ENCODE measurements at regions of chr18 and their contacts with region 1.

Region 1: DNA sequence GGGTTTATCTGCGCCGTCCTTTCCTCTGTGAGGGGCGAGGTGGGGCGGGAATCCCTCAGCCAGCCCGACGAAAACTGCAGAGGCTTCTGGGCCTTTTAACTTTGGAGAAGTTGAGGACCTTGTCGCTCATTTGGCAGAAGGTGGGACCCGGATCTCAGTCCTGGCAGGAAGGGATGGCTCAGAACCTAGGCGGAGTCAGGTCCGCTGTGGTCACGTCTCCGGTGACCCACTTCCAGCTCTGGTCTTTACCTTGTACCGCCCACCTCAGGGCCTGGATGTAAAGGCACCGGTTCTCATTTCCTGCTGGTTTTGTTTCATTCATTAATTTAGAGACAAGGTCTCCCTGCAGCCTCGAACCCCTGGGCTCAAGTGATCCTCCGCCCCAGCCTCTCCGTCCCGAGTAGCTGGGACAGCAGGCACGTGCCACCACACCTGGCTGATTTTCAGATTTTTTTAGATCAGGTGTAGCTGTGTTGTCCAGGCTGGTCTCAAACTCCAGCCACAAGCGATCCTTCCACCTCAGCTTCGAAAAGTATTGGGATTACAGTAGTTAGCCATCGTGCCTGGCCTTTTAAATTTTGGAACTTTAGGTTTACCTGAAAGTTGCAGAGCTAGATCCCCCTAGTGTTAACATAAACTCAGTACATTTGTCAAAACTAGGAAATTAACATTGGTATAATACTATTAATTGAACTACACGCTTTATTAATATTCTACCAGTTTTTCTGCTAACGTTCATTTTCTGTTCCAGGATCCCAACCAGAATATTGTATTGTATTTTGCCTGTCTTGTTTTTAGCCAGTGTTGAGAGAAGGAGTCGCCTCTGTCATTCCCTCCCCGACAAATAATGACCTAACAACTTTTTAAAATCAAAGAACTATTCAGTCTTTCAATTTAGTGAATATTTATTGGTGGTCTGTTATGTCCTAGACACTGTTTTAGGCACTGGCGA is 852 bp downstream of the POLI start:
- DNase-seq: peak in 1 of 2 donors; percentile 76
- H3K4me3 ChIP-seq: peak overlapping the region; percentile 86 to 88
- H3K27ac ChIP-seq: peak overlapping the region; percentile 84 to 93
- H3K4me1 ChIP-seq: peaks cover 0 to 6% of the 10 kb centered on the region in 2 donors
- H3K27me3 ChIP-seq: no peaks in the 10 kb centered on the region
- CTCF ChIP-seq: peak; percentile 22 to 46 (median 39)

Region 2: DNA sequence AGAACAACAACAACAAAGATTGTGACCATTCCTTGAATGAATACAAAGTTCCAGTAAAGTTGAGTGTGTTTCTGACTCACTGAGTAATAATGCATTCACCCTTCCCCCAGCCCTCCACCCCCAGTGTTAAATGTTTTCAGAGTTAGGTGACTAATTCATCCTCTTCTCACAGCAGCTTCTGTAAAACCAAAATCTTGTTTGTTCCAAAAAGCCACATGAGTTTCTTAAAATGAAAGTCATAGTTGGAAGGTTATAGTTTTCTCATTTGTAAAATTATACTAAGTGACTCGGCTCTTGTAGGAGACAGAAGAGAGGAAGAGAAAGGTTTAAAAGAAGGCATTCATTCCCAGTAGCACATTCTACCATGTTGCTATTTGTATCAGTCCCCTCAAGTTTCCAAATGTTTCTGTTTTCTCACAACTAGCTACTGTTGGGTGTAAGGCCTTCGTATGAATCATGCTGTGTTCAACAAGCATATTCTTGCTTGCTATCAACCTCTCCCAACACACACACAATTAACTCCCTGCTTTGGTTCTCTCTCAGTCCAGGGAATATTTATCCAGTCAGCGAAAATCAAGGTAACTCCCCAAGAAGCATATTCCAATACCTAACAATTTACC is 121.0 kb before region 1 on chr18:
- intact Hi-C with region 1: loop called (anchors 10 kb)
- DNase-seq: peak in 1 of 2 donors; percentile 75
- H3K4me3 ChIP-seq: no peak overlapping the region
- H3K27ac ChIP-seq: peak overlapping the region; percentile 69 to 70
- H3K4me1 ChIP-seq: peaks cover 0 to 7% of the 10 kb centered on the region in 2 donors
- H3K27me3 ChIP-seq: no peaks in the 10 kb centered on the region
- CTCF ChIP-seq: no peak

Region 3: DNA sequence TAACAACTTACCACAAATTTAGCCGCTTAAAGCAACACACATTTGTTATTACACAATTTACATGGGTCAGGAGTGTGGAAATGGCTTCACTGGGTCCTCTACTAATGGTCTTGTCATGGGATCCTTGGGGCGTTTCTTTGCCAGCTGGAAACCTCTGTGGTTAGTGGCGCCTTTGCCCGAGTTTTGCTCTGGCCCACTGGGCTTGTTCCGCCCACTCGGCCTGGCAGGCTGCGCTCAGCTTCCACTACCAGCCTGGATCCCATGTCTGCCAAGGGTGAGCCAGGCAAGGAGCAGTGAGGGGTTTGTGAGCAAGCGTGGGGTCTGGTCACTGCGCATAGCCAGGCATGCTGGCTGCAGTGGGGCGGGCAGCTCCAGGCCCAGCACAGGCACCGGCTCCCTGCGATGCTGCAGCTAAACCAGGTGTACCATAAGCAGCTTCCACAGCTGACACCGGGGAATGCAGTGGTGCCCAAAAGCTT is 29.5 kb before region 1 on chr18:
- intact Hi-C with region 1: no loop called
- DNase-seq: peak in 1 of 2 donors; percentile 76
- H3K4me3 ChIP-seq: peak overlapping the region in 1 of 2 donors; percentile 21
- H3K27ac ChIP-seq: peak overlapping the region; percentile 34 to 45
- H3K4me1 ChIP-seq: peaks cover 0 to 11% of the 10 kb centered on the region in 2 donors
- H3K27me3 ChIP-seq: no peaks in the 10 kb centered on the region
- CTCF ChIP-seq: no peak

Region 4: GRCh38 chr18:54357660-54358494 is 87.7 kb after region 1 on chr18 and contains the starts of genes C18orf54 and STARD6:
- intact Hi-C with region 1: loop called (anchors 1 kb)
- DNase-seq: peak; percentile 45 to 91
- H3K4me3 ChIP-seq: peak within 1 kb of the TSS; percentile 77 to 88
- H3K27ac ChIP-seq: peak within 1 kb of the TSS; percentile 19 to 33
- H3K4me1 ChIP-seq: no peaks in the 10 kb centered on the region
- H3K27me3 ChIP-seq: no peaks in the 10 kb centered on the region
- CTCF ChIP-seq: peak in 1 of 3 experiments; percentile 23
- total RNA-seq, gene C18orf54: 0.96 TPM
- total RNA-seq, gene STARD6: not detected